ENCODE measurements at regions of chr11 and their contacts with region 1.

Region 1: DNA sequence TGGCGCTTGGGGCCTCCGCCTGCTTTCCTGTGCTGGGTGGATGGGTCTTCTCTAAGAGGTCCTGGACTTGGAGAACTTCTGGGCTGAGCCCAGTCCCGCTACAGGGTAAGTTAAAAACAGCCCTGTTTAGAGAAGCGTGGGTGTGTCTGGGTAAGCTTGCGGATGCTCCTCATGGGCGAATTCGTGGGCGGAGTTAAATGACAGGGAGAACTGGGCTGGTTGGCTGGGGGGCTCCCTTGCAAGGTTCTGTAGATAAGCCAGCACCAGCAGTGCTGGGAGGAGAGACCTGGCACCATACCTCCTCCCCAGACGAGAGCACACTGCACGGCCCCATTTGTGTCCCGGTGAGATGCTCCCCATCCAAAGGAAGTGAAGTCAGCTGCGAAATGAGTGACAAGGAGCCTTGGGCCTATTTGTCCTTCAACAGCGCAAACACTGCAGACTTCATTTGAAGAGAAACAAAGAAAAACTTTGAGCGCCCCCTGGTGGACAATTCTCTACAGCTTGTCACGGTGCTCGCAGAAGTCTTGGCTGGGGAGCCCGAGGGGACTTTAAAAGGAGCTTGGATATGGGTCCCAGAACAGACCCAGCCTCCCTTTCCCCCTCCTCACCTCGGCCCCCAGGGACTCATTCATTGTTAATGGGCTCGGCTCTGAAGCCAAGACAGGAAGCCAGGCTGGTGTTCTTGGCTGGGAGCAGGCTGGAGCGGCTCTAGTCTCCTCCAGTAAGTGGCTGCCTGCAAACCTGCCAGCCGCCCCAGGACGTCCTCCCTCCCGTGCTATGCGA is 39.5 kb downstream of the TP53I11 start:
- DNase-seq: peak; percentile 72 to 93
- ATAC-seq: peak; percentile 79

Region 2: DNA sequence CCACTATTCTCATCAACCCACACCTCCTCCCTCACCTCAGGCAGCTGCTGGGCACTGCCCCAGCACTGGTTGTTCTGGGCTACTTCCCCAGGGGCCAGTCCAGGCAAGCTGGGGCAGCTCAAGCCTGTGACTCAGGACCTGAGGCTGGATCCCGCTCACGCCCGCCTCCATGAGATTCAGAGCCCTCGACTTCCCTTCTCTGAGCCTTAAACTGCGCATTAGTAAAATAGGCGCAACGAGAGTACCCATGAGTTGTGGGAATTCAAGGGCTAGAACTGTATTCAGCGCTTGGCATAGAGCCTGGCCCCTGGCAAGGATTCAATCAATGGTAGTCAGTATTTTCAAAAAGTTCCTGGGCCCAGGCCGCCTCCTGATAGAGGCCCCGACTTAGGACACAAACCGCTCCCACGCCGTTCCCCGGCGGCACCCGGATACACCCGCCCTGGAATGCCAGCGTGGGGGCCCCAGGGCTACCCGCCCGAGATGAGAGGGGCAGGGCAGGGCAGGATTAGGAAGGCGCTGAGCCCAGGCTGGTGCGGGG is 346.5 kb before region 1 on chr11:
- intact Hi-C with region 1: loop called in 1 of 2 experiments (anchors 5 kb)
- DNase-seq: peak in 1 of 2 donors; percentile 79
- ATAC-seq: peak; percentile 24

Region 3: GRCh38 chr11:44621140-44621681 is 290.0 kb before region 1 on chr11:
- intact Hi-C with region 1: loop called (anchors 5 to 10 kb)
- DNase-seq: peak; percentile 51 to 76
- ATAC-seq: peak; percentile 83

Region 4: DNA sequence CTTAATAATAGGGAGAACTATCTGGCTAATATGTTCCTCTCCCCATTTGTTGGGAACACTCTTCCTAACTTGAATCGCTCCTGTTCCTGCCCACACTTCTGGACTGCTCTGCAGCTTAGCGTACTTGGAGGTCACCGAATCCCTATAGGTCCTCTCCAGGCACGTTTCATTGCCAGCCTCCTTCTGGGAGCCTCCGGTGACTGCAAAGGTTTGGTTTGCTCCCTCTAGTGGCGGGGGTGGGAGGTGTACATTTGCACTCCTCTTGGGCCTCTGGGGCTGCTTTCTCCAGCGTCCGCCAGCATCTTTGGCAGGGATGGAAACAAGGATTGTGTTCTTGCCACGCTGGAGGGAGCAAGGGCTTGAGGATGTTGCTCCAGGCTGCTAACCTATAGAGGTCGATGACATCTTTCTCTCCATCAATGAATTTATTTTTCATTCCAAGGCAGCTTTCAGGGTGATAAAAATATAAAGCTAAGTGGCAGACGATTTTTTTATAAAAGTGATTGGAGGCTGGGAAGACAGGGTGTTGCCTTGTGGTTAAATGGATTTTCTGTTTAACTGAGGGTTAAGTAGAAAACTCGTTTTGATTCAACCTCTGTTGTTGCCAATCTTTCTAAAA is 135.7 kb before region 1 on chr11:
- intact Hi-C with region 1: no loop called
- DNase-seq: peak; percentile 62 to 74
- ATAC-seq: peak; percentile 89

Measured in left colon (tissue), 2 donors.